Right cardiac atrium (tissue), 5 donors: ENCODE measurements at regions of chr9 and their contacts with region 1.

Region 1: GRCh38 chr9:88593537-88594185 is 58.7 kb downstream of the NXNL2 start:
- DNase-seq: peak in 2 of 3 donors; percentile 44 to 56
- ATAC-seq: peak; percentile 76 to 80
- H3K4me3 ChIP-seq: no peak overlapping the region
- H3K27ac ChIP-seq: no peak overlapping the region
- H3K4me1 ChIP-seq: no peaks in the 10 kb centered on the region
- H3K27me3 ChIP-seq: no peaks in the 10 kb centered on the region

Region 2: GRCh38 chr9:88733651-88734421 is 140.2 kb after region 1 on chr9:
- intact Hi-C with region 1: loop called in 2 of 4 experiments (anchors 10 kb)
- DNase-seq: peak; percentile 90 to 96 (median 91)
- ATAC-seq: peak; percentile 72 to 73
- H3K4me3 ChIP-seq: no peak overlapping the region
- H3K27ac ChIP-seq: peak overlapping the region; percentile 61
- H3K4me1 ChIP-seq: peaks cover 6% of the 10 kb centered on the region
- H3K27me3 ChIP-seq: no peaks in the 10 kb centered on the region

Region 3: GRCh38 chr9:88747768-88748167 is 154.1 kb after region 1 on chr9:
- intact Hi-C with region 1: loop called in 1 of 4 experiments (anchors 10 kb)
- DNase-seq: peak in 1 of 3 donors; percentile 46
- ATAC-seq: peak; percentile 69 to 82
- H3K4me3 ChIP-seq: no peak overlapping the region
- H3K27ac ChIP-seq: peak overlapping the region; percentile 47
- H3K4me1 ChIP-seq: peaks cover 2% of the 10 kb centered on the region
- H3K27me3 ChIP-seq: no peaks in the 10 kb centered on the region

Region 4: GRCh38 chr9:89000973-89001916 is 407.6 kb after region 1 on chr9:
- intact Hi-C with region 1: loop called (anchors 2 to 5 kb)
- DNase-seq: peak; percentile 93 to 97 (median 95)
- ATAC-seq: peak; percentile 76 to 79
- H3K4me3 ChIP-seq: no peak overlapping the region
- H3K27ac ChIP-seq: peak overlapping the region; percentile 39
- H3K4me1 ChIP-seq: peaks cover 6% of the 10 kb centered on the region
- H3K27me3 ChIP-seq: no peaks in the 10 kb centered on the region